Esophagus squamous epithelium (tissue), 5 donors: ENCODE measurements at regions of chr10 and their contacts with region 1.

Region 1: GRCh38 chr10:79195091-79195923 is 126.5 kb downstream of the ZMIZ1 start:
- DNase-seq: peak; percentile 37
- H3K4me3 ChIP-seq: no peak overlapping the region
- H3K27ac ChIP-seq: peak overlapping the region; percentile 17 to 71 (median 64)
- H3K4me1 ChIP-seq: peaks cover 8 to 60% (median 31%) of the 10 kb centered on the region in 3 donors
- H3K27me3 ChIP-seq: no peaks in the 10 kb centered on the region
- CTCF ChIP-seq: peak; percentile 90 to 98 (median 94)
- POLR2A ChIP-seq: no peak

Region 2: GRCh38 chr10:78047314-78047891 is 1147.9 kb before region 1 on chr10:
- intact Hi-C with region 1: loop called (anchors 5 kb)
- DNase-seq: peak; percentile 22
- H3K4me3 ChIP-seq: no peak overlapping the region
- H3K27ac ChIP-seq: peak overlapping the region in 1 of 4 donors; percentile 54
- H3K4me1 ChIP-seq: peaks cover 3 to 46% (median 8%) of the 10 kb centered on the region in 3 donors
- H3K27me3 ChIP-seq: no peaks in the 10 kb centered on the region
- CTCF ChIP-seq: peak; percentile 75 to 93 (median 88)
- POLR2A ChIP-seq: no peak